Caco-2 (cell line): ENCODE measurements at regions of chr17 and their contacts with region 1.

Region 1: DNA sequence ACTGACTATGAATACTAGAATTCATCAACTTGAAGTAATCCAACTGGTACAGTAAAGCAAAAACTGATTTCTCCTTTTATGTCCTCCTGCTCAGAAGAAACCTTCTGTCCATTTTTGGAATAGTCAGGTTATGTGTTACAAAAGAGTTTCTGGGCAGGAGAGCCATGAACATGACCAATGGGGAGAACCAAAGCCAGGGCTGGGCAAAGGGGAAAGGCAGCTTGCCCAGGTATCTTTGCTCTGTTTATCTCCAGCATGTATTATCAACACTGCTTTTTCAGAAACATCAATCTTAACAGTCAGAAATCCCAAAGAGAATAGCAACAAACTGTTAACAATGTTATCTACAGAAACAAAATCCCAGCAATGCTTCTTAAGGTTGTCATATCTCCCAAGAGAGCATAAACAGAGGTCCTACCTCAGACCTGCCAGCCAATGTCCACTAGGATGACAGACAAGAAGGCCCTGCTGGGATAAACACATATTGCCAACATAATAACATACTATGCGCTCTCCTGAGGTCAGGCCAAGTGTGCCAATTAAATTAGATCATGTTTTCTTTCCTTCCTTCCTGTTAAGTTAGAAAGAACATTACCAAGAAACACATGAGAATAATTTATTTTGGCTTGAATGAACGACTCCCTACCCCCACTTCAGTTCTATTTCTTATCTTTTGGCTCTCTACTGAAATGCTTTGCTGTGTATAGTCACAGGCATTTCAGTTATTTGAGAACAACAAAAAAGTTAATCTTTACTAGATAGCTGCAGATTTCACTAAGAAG is 28.0 kb downstream of the BLMH start:
- DNase-seq: peak; percentile 63 to 67
- H3K4me3 ChIP-seq: no peak overlapping the region
- H3K4me3 Mint-ChIP-seq: peak overlapping the region; percentile 47
- H3K27ac Mint-ChIP-seq: peak overlapping the region; percentile 73
- H3K4me1 ChIP-seq: peaks cover 32% of the 10 kb centered on the region
- H3K4me1 Mint-ChIP-seq: peaks cover 21% of the 10 kb centered on the region
- H3K27me3 ChIP-seq: no peaks in the 10 kb centered on the region
- H3K27me3 Mint-ChIP-seq: no peaks in the 10 kb centered on the region
- CTCF ChIP-seq: no peak

Region 2: GRCh38 chr17:30226878-30227277 is 36.9 kb before region 1 on chr17:
- CTCF ChIA-PET with region 1: interaction called, 7 read pairs
- POLR2A ChIA-PET with region 1: no interaction called
- intact Hi-C with region 1: loop called (anchors 1 kb)
- DNase-seq: no peak
- H3K4me3 ChIP-seq: no peak overlapping the region
- H3K4me3 Mint-ChIP-seq: no peak overlapping the region
- H3K27ac Mint-ChIP-seq: peak overlapping the region; percentile 93
- H3K4me1 ChIP-seq: peaks cover 66% of the 10 kb centered on the region
- H3K4me1 Mint-ChIP-seq: peaks cover 68% of the 10 kb centered on the region
- H3K27me3 ChIP-seq: no peaks in the 10 kb centered on the region
- H3K27me3 Mint-ChIP-seq: no peaks in the 10 kb centered on the region
- CTCF ChIP-seq: no peak

Region 3: GRCh38 chr17:30248786-30249185 is 15.0 kb before region 1 on chr17:
- CTCF ChIA-PET with region 1: no interaction called
- POLR2A ChIA-PET with region 1: no interaction called
- intact Hi-C with region 1: loop called (anchors 1 kb)
- DNase-seq: no peak
- H3K4me3 ChIP-seq: no peak overlapping the region
- H3K4me3 Mint-ChIP-seq: no peak overlapping the region
- H3K27ac Mint-ChIP-seq: no peak overlapping the region
- H3K4me1 ChIP-seq: peaks cover 40% of the 10 kb centered on the region
- H3K4me1 Mint-ChIP-seq: peaks cover 18% of the 10 kb centered on the region
- H3K27me3 ChIP-seq: no peaks in the 10 kb centered on the region
- H3K27me3 Mint-ChIP-seq: no peaks in the 10 kb centered on the region
- CTCF ChIP-seq: no peak

Region 4: GRCh38 chr17:30291543-30292285 is 28.0 kb after region 1 on chr17 and contains the start of gene BLMH:
- CTCF ChIA-PET with region 1: no interaction called
- POLR2A ChIA-PET with region 1: no interaction called
- intact Hi-C with region 1: loop called (anchors 2 kb)
- DNase-seq: peak; percentile 72 to 84
- H3K4me3 ChIP-seq: peak within 1 kb of the TSS; percentile 80
- H3K4me3 Mint-ChIP-seq: peak within 1 kb of the TSS; percentile 76
- H3K27ac Mint-ChIP-seq: peak within 1 kb of the TSS; percentile 69
- H3K4me1 ChIP-seq: peaks cover 11% of the 10 kb centered on the region
- H3K4me1 Mint-ChIP-seq: no peaks in the 10 kb centered on the region
- H3K27me3 ChIP-seq: no peaks in the 10 kb centered on the region
- H3K27me3 Mint-ChIP-seq: no peaks in the 10 kb centered on the region
- CTCF ChIP-seq: no peak
- total RNA-seq, gene BLMH: 56.1 and 57.4 TPM in 2 replicates